ENCODE measurements at regions of chr11 and their contacts with region 1.

Region 1: GRCh38 chr11:11028017-11028692 is 170.3 kb upstream of the ZBED5 start:
- DNase-seq: peak; percentile 60 to 76 (median 65)
- H3K4me3 ChIP-seq: no peak overlapping the region
- H3K4me3 Mint-ChIP-seq: no peak overlapping the region
- H3K27ac ChIP-seq: no peak overlapping the region
- H3K27ac Mint-ChIP-seq: no peak overlapping the region
- H3K4me1 ChIP-seq: no peaks in the 10 kb centered on the region
- H3K4me1 Mint-ChIP-seq: peaks cover 0 to 2% (median 0%) of the 10 kb centered on the region in 4 donors
- H3K27me3 ChIP-seq: no peaks in the 10 kb centered on the region
- H3K27me3 Mint-ChIP-seq: peaks cover 0 to 2% of the 10 kb centered on the region in 2 donors

Region 2: DNA sequence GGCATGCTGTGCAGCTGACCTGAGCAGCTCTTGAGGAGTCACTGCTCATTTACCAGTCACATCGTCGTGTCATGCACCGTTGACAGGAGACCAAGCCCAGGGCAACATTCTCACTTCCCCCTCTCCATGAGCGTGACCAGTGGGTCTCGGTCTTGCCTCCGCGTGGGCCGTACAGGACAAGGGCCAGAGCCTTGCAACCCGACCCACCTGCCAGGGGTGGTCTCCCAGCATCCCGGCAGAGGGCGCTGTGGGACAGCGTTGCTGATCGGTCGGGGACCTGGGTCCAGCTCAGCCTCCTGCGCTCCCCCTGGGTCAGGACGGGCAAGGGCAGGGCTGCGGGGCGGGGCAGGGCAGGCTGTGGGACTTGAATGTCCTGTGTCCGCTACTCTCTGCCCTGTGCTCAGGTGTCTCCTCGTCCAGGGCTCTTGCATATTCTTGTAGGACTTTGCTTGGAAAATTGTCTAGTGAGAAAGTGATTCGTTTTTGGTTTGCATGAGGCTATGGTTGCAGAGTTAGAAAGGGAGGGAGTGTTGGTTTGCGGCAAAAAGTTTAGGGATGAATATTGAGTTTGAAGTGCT is 235.7 kb before region 1 on chr11:
- CTCF ChIA-PET with region 1: interaction called, 258 read pairs
- POLR2A ChIA-PET with region 1: interaction called, 6 read pairs
- intact Hi-C with region 1: no loop called
- DNase-seq: peak; percentile 71 to 81 (median 72)
- H3K4me3 ChIP-seq: no peak overlapping the region
- H3K4me3 Mint-ChIP-seq: peak overlapping the region in 3 of 8 donors; percentile 0 to 65 (median 58)
- H3K27ac ChIP-seq: no peak overlapping the region
- H3K27ac Mint-ChIP-seq: peak overlapping the region in 1 of 7 donors; percentile 21
- H3K4me1 ChIP-seq: peaks cover 28% of the 10 kb centered on the region
- H3K4me1 Mint-ChIP-seq: peaks cover 21 to 47% (median 33%) of the 10 kb centered on the region in 4 donors
- H3K27me3 ChIP-seq: no peaks in the 10 kb centered on the region
- H3K27me3 Mint-ChIP-seq: peaks cover 1 to 2% of the 10 kb centered on the region in 2 donors

Region 3: GRCh38 chr11:10970926-10971325 is 57.2 kb before region 1 on chr11:
- CTCF ChIA-PET with region 1: no interaction called
- POLR2A ChIA-PET with region 1: no interaction called
- intact Hi-C with region 1: no loop called
- DNase-seq: no peak
- H3K4me3 ChIP-seq: no peak overlapping the region
- H3K4me3 Mint-ChIP-seq: no peak overlapping the region
- H3K27ac ChIP-seq: no peak overlapping the region
- H3K27ac Mint-ChIP-seq: no peak overlapping the region
- H3K4me1 ChIP-seq: no peaks in the 10 kb centered on the region
- H3K4me1 Mint-ChIP-seq: no peaks in the 10 kb centered on the region
- H3K27me3 ChIP-seq: no peaks in the 10 kb centered on the region
- H3K27me3 Mint-ChIP-seq: peaks cover 0 to 4% of the 10 kb centered on the region in 2 donors

Region 4: GRCh38 chr11:11010624-11011127 is 17.5 kb before region 1 on chr11:
- CTCF ChIA-PET with region 1: interaction called, 17 read pairs
- POLR2A ChIA-PET with region 1: no interaction called
- intact Hi-C with region 1: no loop called
- DNase-seq: peak in 2 of 5 donors; percentile 3 to 5
- H3K4me3 ChIP-seq: no peak overlapping the region
- H3K4me3 Mint-ChIP-seq: no peak overlapping the region
- H3K27ac ChIP-seq: no peak overlapping the region
- H3K27ac Mint-ChIP-seq: no peak overlapping the region
- H3K4me1 ChIP-seq: no peaks in the 10 kb centered on the region
- H3K4me1 Mint-ChIP-seq: no peaks in the 10 kb centered on the region
- H3K27me3 ChIP-seq: peaks cover 6% of the 10 kb centered on the region
- H3K27me3 Mint-ChIP-seq: peaks cover 12 to 22% of the 10 kb centered on the region in 2 donors

Region 5: GRCh38 chr11:11069841-11070835 is 42.0 kb after region 1 on chr11:
- CTCF ChIA-PET with region 1: interaction called, 10 read pairs
- POLR2A ChIA-PET with region 1: no interaction called
- intact Hi-C with region 1: no loop called
- DNase-seq: no peak
- H3K4me3 ChIP-seq: no peak overlapping the region
- H3K4me3 Mint-ChIP-seq: no peak overlapping the region
- H3K27ac ChIP-seq: no peak overlapping the region
- H3K27ac Mint-ChIP-seq: no peak overlapping the region
- H3K4me1 ChIP-seq: no peaks in the 10 kb centered on the region
- H3K4me1 Mint-ChIP-seq: no peaks in the 10 kb centered on the region
- H3K27me3 ChIP-seq: no peaks in the 10 kb centered on the region
- H3K27me3 Mint-ChIP-seq: no peaks in the 10 kb centered on the region

Region 6: GRCh38 chr11:11265994-11266606 is 237.9 kb after region 1 on chr11:
- CTCF ChIA-PET with region 1: interaction called, 39 read pairs
- POLR2A ChIA-PET with region 1: no interaction called
- intact Hi-C with region 1: loop called (anchors 1 kb)
- DNase-seq: peak in 4 of 5 donors; percentile 30 to 51 (median 46)
- H3K4me3 ChIP-seq: no peak overlapping the region
- H3K4me3 Mint-ChIP-seq: no peak overlapping the region
- H3K27ac ChIP-seq: no peak overlapping the region
- H3K27ac Mint-ChIP-seq: no peak overlapping the region
- H3K4me1 ChIP-seq: no peaks in the 10 kb centered on the region
- H3K4me1 Mint-ChIP-seq: peaks cover 0 to 3% (median 0%) of the 10 kb centered on the region in 4 donors
- H3K27me3 ChIP-seq: no peaks in the 10 kb centered on the region
- H3K27me3 Mint-ChIP-seq: peaks cover 0 to 3% of the 10 kb centered on the region in 2 donors

Region 7: GRCh38 chr11:11798586-11799438 is 770.7 kb after region 1 on chr11:
- CTCF ChIA-PET with region 1: interaction called, 22 read pairs
- POLR2A ChIA-PET with region 1: no interaction called
- intact Hi-C with region 1: no loop called
- DNase-seq: peak; percentile 52 to 71 (median 68)
- H3K4me3 ChIP-seq: no peak overlapping the region
- H3K4me3 Mint-ChIP-seq: no peak overlapping the region
- H3K27ac ChIP-seq: no peak overlapping the region
- H3K27ac Mint-ChIP-seq: no peak overlapping the region
- H3K4me1 ChIP-seq: no peaks in the 10 kb centered on the region
- H3K4me1 Mint-ChIP-seq: no peaks in the 10 kb centered on the region
- H3K27me3 ChIP-seq: no peaks in the 10 kb centered on the region
- H3K27me3 Mint-ChIP-seq: peaks cover 21% of the 10 kb centered on the region in 2 donors

Measured in CD4-positive, alpha-beta memory T cell (primary cell).